ENCODE measurements at regions of chr1 and their contacts with region 1.

Region 1: DNA sequence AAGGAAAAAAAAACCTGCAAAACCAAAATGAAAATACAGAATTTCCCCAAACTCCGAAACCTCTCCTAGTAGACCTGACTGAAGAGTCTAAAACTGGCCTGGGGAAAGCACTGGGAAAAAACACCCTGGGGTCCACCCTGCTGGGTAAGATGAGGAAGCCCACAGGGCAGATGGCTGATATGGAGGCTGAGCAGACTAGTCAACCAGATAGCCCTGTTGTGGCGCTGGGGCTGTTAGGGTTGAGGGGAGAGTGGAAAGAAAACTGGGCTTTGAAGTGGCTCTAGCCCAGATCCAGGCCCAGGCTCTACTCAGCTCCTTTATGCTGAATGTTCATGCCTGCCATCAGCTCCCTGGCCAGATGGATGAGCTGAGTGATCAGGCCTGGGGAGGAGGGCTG is 6.8 kb upstream of the SLAMF1 start:
- DNase-seq: peak; percentile 73
- H3K4me3 ChIP-seq: peak overlapping the region; percentile 61
- H3K27ac ChIP-seq: peak overlapping the region; percentile 81
- H3K4me1 ChIP-seq: peaks cover 86% of the 10 kb centered on the region
- CTCF ChIP-seq: no peak

Region 2: DNA sequence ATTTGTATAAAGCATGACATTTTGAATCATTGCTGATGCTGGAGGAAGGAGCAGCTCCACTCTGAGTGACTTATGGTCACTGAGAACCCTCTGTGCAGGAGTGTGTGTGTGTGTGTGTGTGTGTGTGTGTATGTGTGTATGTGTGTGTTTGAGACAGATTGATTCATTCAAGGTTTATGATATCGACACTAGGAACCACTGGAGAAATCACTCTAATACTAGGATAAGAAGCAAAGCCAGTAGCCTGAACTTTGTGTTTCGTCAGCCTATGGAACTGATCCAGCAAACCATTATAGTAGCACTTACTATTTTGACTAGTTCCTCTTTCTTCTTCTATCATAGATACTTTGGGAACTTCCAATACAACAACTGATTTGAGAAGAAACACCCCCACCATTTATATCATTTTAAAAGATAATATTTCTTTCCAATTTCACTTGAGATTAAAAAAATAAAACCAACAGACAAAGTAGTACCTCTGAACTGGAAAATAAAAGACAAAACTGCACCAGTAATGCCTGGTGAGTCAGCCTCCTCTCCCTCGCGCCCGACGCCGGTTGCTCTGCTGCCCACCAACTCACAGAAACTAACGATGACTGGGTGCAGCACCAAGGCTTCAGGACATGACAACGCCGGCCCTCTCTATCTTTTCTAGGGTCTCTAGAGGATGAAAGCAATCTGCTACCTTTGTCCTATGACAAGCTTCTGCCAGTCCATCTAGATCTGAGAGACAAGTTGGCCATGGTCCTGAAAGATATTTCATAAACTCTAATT is 27.7 kb before region 1 on chr1:
- CTCF ChIA-PET with region 1: no interaction called
- POLR2A ChIA-PET with region 1: interaction called, 5 read pairs
- intact Hi-C with region 1: loop called (anchors 2 kb)
- DNase-seq: no peak
- H3K4me3 ChIP-seq: peak overlapping the region; percentile 43
- H3K27ac ChIP-seq: peak overlapping the region; percentile 87
- H3K4me1 ChIP-seq: peaks cover 96% of the 10 kb centered on the region
- CTCF ChIP-seq: no peak

Region 3: GRCh38 chr1:160664573-160665051 is 11.0 kb after region 1 on chr1:
- CTCF ChIA-PET with region 1: no interaction called
- POLR2A ChIA-PET with region 1: interaction called, 10 read pairs
- intact Hi-C with region 1: no loop called
- DNase-seq: peak; percentile 54
- H3K4me3 ChIP-seq: peak overlapping the region; percentile 16
- H3K27ac ChIP-seq: peak overlapping the region; percentile 33
- H3K4me1 ChIP-seq: peaks cover 43% of the 10 kb centered on the region
- CTCF ChIP-seq: no peak

Region 4: GRCh38 chr1:160711602-160712311 is 58.1 kb after region 1 on chr1 and contains the start of gene CD48:
- CTCF ChIA-PET with region 1: no interaction called
- POLR2A ChIA-PET with region 1: interaction called, 3 read pairs
- intact Hi-C with region 1: loop called (anchors 2 kb)
- DNase-seq: peak; percentile 88
- H3K4me3 ChIP-seq: peak within 1 kb of the TSS; percentile 77
- H3K27ac ChIP-seq: peak within 1 kb of the TSS; percentile 98
- H3K4me1 ChIP-seq: peaks cover 61% of the 10 kb centered on the region
- CTCF ChIP-seq: no peak
- total RNA-seq, gene CD48: 131 and 150 TPM in 2 replicates